Activated T-helper 1 cell treated with anti-CD3 and anti-CD28 coated beads, Interleukin-12 subunit alpha, Interleukin-12 subunit beta, Interleukin-2, Interleukin-4 antibody, amounts not matched to agents 30 ng/mL and 10 ng/mL and 1 ng/mL, durations not matched to agents 14 hours and 24 hours and 36 hours (primary cell): ENCODE measurements at regions of chr5 and their contacts with region 1.

Region 1: DNA sequence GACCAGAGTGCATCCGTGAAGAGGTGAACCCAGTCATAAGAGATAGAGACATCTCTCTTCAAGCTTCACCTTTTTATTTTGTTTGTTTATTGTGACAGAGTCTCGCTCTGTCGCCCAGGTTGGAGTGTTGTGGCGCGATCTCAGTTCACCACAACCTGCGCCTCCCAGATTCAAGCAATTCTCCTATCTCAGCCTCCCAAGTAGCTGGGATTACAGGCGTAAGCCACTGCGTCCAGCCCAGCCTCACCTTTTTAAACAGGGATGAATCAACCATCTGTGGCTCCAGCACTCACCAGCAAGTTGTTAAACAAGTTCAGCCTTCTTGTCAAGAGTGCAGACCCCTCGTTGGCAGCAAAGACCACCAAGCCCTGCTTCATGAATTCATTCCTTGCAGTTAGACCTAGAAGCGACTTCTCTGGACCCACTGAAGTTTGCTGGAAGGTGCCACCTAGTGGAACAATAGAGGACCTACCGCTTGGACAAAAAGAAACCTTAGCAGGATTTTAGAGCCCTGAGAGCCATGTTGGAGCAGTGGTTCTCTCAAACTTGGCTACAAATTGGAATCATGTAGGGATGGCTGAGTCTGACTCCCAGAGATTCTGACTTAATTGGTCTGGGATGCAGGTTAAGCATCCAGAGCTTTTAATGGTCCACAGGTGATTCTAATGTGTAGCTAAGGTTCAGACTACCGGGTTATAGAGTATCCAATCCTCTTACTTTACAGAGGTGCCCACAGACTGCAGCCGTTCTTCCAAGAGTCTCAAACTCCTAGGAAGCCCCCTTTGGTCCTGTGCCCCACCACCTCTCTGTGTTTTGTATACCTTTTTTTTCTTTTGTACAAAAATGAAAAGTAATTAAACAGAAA is 10.5 kb upstream of the GALNT10 start:
- DNase-seq: peak; percentile 25
- H3K4me3 Mint-ChIP-seq: no peak overlapping the region
- H3K27ac Mint-ChIP-seq: no peak overlapping the region
- H3K4me1 Mint-ChIP-seq: peaks cover 38% of the 10 kb centered on the region
- H3K27me3 Mint-ChIP-seq: peaks cover 8% of the 10 kb centered on the region

Region 2: GRCh38 chr5:153938191-153938842 is 241.8 kb before region 1 on chr5:
- intact Hi-C with region 1: no loop called
- DNase-seq: no peak
- H3K4me3 Mint-ChIP-seq: no peak overlapping the region
- H3K27ac Mint-ChIP-seq: no peak overlapping the region
- H3K4me1 Mint-ChIP-seq: no peaks in the 10 kb centered on the region
- H3K27me3 Mint-ChIP-seq: no peaks in the 10 kb centered on the region

Region 3: GRCh38 chr5:154211641-154212390 is 31.7 kb after region 1 on chr5:
- intact Hi-C with region 1: no loop called
- DNase-seq: no peak
- H3K4me3 Mint-ChIP-seq: no peak overlapping the region
- H3K27ac Mint-ChIP-seq: no peak overlapping the region
- H3K4me1 Mint-ChIP-seq: peaks cover 66% of the 10 kb centered on the region
- H3K27me3 Mint-ChIP-seq: no peaks in the 10 kb centered on the region

Region 4: GRCh38 chr5:154236536-154237375 is 56.7 kb after region 1 on chr5:
- intact Hi-C with region 1: loop called (anchors 2 kb)
- DNase-seq: no peak
- H3K4me3 Mint-ChIP-seq: no peak overlapping the region
- H3K27ac Mint-ChIP-seq: peak overlapping the region; percentile 50
- H3K4me1 Mint-ChIP-seq: peaks cover 69% of the 10 kb centered on the region
- H3K27me3 Mint-ChIP-seq: no peaks in the 10 kb centered on the region

Region 5: GRCh38 chr5:154405078-154405792 is 225.2 kb after region 1 on chr5:
- intact Hi-C with region 1: loop called (anchors 1 kb)
- DNase-seq: peak; percentile 50
- H3K4me3 Mint-ChIP-seq: peak overlapping the region; percentile 26
- H3K27ac Mint-ChIP-seq: peak overlapping the region; percentile 40
- H3K4me1 Mint-ChIP-seq: peaks cover 7% of the 10 kb centered on the region
- H3K27me3 Mint-ChIP-seq: no peaks in the 10 kb centered on the region